Thyroid gland (tissue), 4 donors: ENCODE measurements at regions of chr10 and their contacts with region 1.

Region 1: DNA sequence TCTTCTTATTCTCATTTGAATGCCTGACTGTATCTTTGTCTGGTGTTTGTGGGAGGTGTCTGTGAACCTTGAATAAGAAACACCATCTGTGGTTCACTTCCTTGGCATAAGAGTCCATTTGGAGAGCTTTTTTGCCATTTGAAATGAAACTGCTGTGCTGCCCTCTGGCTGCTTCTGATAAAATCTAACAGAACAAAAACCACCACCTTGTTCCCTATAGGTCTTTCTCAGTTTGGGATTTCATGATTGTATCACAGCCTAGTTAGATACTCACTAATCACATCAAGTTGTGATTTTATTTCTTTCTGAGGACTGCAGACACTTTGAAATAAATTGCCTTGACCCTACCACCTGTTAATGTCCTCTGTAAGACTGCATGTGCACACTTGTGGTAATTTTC is 102.7 kb upstream of the FAM13C start:
- DNase-seq: peak; percentile 14 to 23
- H3K4me3 ChIP-seq: no peak overlapping the region
- H3K27ac ChIP-seq: no peak overlapping the region
- H3K4me1 ChIP-seq: no peaks in the 10 kb centered on the region
- H3K27me3 ChIP-seq: no peaks in the 10 kb centered on the region
- CTCF ChIP-seq: peak; percentile 6 to 45 (median 26)
- POLR2A ChIP-seq: no peak

Region 2: DNA sequence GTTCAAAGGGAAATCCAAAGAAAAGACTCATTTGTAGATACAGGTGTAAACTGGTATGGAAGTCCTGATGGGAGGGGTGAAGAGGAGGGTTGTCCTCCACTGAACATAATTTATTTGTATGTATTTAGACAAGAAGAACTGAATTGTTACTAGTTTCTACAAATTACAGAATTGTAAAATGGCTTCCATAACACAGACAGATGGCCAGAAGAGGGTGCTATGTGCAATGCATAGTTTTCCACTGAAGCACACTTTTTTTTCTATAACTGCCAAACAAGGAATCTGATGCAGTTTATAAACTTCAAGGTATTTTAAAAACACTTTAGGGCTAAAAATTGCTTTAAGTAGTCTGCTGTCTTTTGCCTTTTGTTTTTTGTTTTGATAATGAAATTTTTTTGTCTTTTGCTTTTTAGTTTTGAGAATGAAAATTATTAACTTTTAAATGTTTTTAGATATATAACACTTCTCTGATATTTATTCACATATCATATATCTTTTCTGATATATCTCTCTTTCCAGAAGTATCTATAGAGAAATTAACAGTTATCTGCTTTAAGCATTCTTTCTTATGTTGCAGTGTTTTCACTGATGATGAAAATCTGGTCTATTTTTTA is 230.2 kb before region 1 on chr10:
- intact Hi-C with region 1: loop called (anchors 10 kb)
- DNase-seq: peak; percentile 12 to 16
- H3K4me3 ChIP-seq: no peak overlapping the region
- H3K27ac ChIP-seq: no peak overlapping the region
- H3K4me1 ChIP-seq: no peaks in the 10 kb centered on the region
- H3K27me3 ChIP-seq: no peaks in the 10 kb centered on the region
- CTCF ChIP-seq: peak in 5 of 6 experiments; percentile 18 to 57 (median 55)
- POLR2A ChIP-seq: no peak